Astrocyte of the cerebellum (primary cell): ENCODE measurements at regions of chr4 and their contacts with region 1.

Region 1: DNA sequence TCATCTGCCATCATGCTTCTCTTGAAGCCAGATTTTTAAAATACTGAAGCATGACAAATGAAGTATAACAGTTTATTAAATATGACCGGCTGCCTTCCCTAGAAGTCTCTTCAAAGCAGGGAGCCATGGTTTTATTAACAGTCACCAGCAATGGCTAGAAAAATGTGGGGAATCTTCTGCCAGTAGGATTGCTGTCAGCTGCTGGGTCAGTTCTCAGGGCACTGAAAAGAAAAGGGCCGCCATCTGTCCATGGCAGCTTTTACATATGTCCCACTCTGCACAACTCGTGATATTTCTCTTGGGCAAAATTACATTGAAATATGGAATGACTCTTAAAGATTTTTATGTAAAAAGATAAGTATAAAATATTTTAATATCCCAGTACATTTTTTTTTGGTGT is 2.8 kb downstream of the CCNG2 start:
- DNase-seq: no peak
- H3K4me3 ChIP-seq: no peak overlapping the region
- CTCF ChIP-seq: no peak

Region 2: GRCh38 chr4:77052352-77052751 is 107.5 kb before region 1 on chr4:
- in situ Hi-C with region 1: loop called (anchors 5 kb)
- DNase-seq: no peak
- H3K4me3 ChIP-seq: no peak overlapping the region
- CTCF ChIP-seq: peak; percentile 46

Region 3: GRCh38 chr4:77082886-77083608 is 76.8 kb before region 1 on chr4:
- in situ Hi-C with region 1: loop called (anchors 5 kb)
- DNase-seq: no peak
- H3K4me3 ChIP-seq: no peak overlapping the region
- CTCF ChIP-seq: no peak

Region 4: DNA sequence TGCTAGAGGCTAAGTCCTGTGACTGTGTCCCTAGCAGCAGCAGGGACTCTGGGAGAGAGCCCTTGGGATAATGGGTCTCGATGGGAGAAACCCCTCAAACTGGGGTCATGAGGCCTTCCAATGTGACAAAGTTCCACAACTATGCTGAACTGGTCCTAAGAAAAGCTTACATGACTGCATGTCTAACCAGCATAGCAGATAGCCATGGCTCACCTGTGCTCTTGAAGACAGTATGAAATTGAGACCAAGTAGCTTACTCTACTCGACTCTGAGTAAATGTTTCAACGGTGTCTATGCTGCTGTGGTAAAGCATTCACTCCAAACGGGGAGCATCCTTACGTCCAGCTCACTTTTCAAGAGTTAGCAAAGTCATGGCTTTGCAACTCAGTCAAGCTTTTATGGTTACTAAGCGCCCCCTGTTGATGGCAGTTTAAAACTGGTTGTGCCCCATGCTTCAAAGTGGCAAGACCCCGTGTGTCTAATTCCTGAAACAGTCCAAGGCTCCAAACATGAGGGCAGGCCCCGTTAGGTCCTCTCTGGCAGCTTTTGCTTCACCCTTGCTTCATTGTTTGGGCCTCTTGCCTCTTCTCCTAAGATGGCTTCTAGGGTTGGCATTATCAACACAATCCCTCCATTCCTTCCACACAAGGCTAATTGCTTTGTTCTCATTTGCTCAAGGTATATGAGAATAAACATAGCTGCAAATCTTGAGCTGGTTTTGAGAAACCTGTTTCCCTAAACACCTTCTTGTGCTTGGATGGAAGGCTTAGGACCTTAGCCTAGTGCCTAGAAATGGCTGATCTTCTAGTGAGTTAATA is 43.8 kb after region 1 on chr4:
- in situ Hi-C with region 1: no loop called
- DNase-seq: peak; percentile 75
- H3K4me3 ChIP-seq: no peak overlapping the region
- CTCF ChIP-seq: peak; percentile 73